ENCODE measurements at regions of chr3 and their contacts with region 1.

Region 1: DNA sequence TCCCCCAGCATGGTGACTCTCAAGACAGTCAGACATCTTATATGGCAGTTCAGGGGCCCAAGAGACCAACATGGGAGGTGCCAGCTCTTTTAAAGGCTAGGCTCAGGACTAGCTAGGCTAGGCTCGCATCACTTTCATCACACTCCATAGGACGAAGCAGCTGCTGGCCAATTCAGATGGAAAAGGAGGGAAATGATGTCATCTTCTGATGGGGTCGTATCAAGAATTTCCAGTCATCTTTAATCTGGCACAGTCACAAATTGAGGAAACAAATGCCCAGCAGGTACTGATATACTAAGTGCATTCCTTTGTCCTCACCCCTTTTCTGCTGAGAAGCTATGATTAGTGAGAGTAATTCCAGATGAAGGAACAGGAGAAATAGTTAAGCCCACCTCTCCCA is 360.9 kb downstream of the CNTN3 start:
- DNase-seq: no peak
- ATAC-seq: no peak
- H3K4me3 ChIP-seq: no peak overlapping the region
- H3K27ac ChIP-seq: no peak overlapping the region
- H3K4me1 ChIP-seq: no peaks in the 10 kb centered on the region
- H3K27me3 ChIP-seq: no peaks in the 10 kb centered on the region
- CTCF ChIP-seq: no peak

Region 2: DNA sequence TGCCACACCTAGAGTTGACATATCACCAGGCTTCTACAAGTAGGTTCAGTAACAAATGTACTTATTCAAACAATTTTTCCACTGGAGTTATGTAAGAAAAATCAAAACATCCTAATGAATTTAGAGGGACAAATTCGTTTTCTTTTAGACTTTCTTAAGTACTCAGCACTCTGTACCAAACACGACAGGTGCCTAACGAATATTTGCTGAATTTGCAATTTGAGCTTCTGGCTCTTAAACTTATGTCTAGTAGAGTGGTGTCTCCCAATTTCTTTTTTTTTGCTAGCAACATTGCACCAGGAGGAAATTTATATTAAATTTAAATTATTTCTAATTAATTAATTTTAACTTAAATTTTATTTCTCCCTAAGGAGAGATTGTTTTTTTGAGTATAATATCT is 36.1 kb before region 1 on chr3:
- CTCF ChIA-PET with region 1: no interaction called
- POLR2A ChIA-PET with region 1: no interaction called
- in situ Hi-C with region 1: no loop called
- intact Hi-C with region 1: no loop called
- DNase-seq: no peak
- ATAC-seq: no peak
- H3K4me3 ChIP-seq: no peak overlapping the region
- H3K27ac ChIP-seq: no peak overlapping the region
- H3K4me1 ChIP-seq: no peaks in the 10 kb centered on the region
- H3K27me3 ChIP-seq: no peaks in the 10 kb centered on the region
- CTCF ChIP-seq: no peak

Region 3: GRCh38 chr3:74375653-74376052 is 122.1 kb after region 1 on chr3:
- CTCF ChIA-PET with region 1: no interaction called
- POLR2A ChIA-PET with region 1: interaction called, 12 read pairs
- in situ Hi-C with region 1: no loop called
- intact Hi-C with region 1: no loop called
- DNase-seq: no peak
- ATAC-seq: no peak
- H3K4me3 ChIP-seq: no peak overlapping the region
- H3K27ac ChIP-seq: no peak overlapping the region
- H3K4me1 ChIP-seq: no peaks in the 10 kb centered on the region
- H3K27me3 ChIP-seq: no peaks in the 10 kb centered on the region
- CTCF ChIP-seq: no peak

Measured in Panc1 (cell line).